ENCODE measurements at regions of chr5 and their contacts with region 1.

Region 1: GRCh38 chr5:95961617-95962474 is at the start of gene ELL2:
- DNase-seq: peak; percentile 99
- H3K4me3 ChIP-seq: peak within 1 kb of the TSS; percentile 78 to 95 (median 84)
- H3K27ac ChIP-seq: peak within 1 kb of the TSS; percentile 52 to 82
- H3K4me1 ChIP-seq: peaks cover 4 to 26% (median 16%) of the 10 kb centered on the region in 4 experiments
- H3K27me3 ChIP-seq: peaks cover 0 to 13% (median 0%) of the 10 kb centered on the region in 5 experiments

Region 2: GRCh38 chr5:95858661-95859326 is 103.1 kb before region 1 on chr5:
- CTCF ChIA-PET with region 1: interaction called, 10 read pairs
- POLR2A ChIA-PET with region 1: no interaction called
- DNase-seq: peak; percentile 92 to 96 (median 96)
- H3K4me3 ChIP-seq: peak overlapping the region in 4 of 7 experiments; percentile 11 to 70 (median 35)
- H3K27ac ChIP-seq: no peak overlapping the region
- H3K4me1 ChIP-seq: peaks cover 6 to 28% (median 17%) of the 10 kb centered on the region in 4 experiments
- H3K27me3 ChIP-seq: no peaks in the 10 kb centered on the region

Region 3: DNA sequence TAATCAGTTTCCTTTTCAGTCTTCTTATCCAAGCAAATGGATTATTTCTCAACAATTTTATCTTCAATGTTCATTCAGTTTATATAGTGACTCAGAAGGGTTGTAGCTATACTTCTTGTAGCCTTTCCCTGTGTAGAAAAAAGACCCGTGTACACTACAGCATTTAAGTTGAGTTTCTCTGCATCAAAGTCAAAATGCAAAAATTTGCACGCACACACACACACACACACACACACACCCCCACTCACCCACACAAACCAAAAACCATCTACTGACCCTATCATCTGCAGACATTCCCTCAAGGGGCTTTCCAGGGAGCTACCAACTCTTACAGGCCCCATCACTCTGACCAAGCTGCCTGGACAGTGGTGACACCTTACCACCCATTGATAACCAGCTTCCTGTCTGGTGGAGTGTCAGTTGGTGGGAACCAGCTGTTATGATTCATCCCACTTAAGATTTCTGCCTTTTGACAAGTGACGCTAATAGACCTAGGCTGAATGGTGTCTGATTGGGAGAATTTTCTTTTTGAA is 12.0 kb after region 1 on chr5:
- CTCF ChIA-PET with region 1: interaction called, 39 read pairs
- POLR2A ChIA-PET with region 1: interaction called, 7 read pairs
- DNase-seq: peak; percentile 78 to 97 (median 95)
- H3K4me3 ChIP-seq: no peak overlapping the region
- H3K27ac ChIP-seq: peak overlapping the region in 1 of 2 experiments; percentile 9
- H3K4me1 ChIP-seq: peaks cover 0 to 9% (median 3%) of the 10 kb centered on the region in 4 experiments
- H3K27me3 ChIP-seq: no peaks in the 10 kb centered on the region